Endothelial cell of umbilical vein (primary cell): ENCODE measurements at regions of chr12 and their contacts with region 1.

Region 1: GRCh38 chr12:95633049-95633545 is 81.8 kb upstream of the USP44 start:
- DNase-seq: peak; percentile 90
- H3K4me3 ChIP-seq: no peak overlapping the region
- H3K27ac ChIP-seq: peak overlapping the region; percentile 99
- H3K4me1 ChIP-seq: peaks cover 54% of the 10 kb centered on the region
- H3K27me3 ChIP-seq: no peaks in the 10 kb centered on the region
- CTCF ChIP-seq: no peak
- POLR2A ChIP-seq: no peak

Region 2: GRCh38 chr12:95608252-95609033 is 24.7 kb before region 1 on chr12:
- CTCF ChIA-PET with region 1: interaction called, 5 read pairs
- POLR2A ChIA-PET with region 1: interaction called, 4 read pairs
- dilution Hi-C with region 1: no loop called
- intact Hi-C with region 1: loop called (anchors 1 kb)
- DNase-seq: peak; percentile 91
- H3K4me3 ChIP-seq: no peak overlapping the region
- H3K27ac ChIP-seq: peak overlapping the region; percentile 91
- H3K4me1 ChIP-seq: peaks cover 74% of the 10 kb centered on the region
- H3K27me3 ChIP-seq: no peaks in the 10 kb centered on the region
- CTCF ChIP-seq: no peak
- POLR2A ChIP-seq: no peak

Region 3: GRCh38 chr12:95663525-95663924 is 30.4 kb after region 1 on chr12:
- CTCF ChIA-PET with region 1: interaction called, 3 read pairs
- POLR2A ChIA-PET with region 1: no interaction called
- dilution Hi-C with region 1: no loop called
- intact Hi-C with region 1: loop called (anchors 1 kb)
- DNase-seq: peak; percentile 97
- H3K4me3 ChIP-seq: peak overlapping the region in 2 of 3 experiments; percentile 56 to 67
- H3K27ac ChIP-seq: peak overlapping the region; percentile 93
- H3K4me1 ChIP-seq: peaks cover 26% of the 10 kb centered on the region
- H3K27me3 ChIP-seq: no peaks in the 10 kb centered on the region
- CTCF ChIP-seq: no peak
- POLR2A ChIP-seq: peak; percentile 41

Region 4: DNA sequence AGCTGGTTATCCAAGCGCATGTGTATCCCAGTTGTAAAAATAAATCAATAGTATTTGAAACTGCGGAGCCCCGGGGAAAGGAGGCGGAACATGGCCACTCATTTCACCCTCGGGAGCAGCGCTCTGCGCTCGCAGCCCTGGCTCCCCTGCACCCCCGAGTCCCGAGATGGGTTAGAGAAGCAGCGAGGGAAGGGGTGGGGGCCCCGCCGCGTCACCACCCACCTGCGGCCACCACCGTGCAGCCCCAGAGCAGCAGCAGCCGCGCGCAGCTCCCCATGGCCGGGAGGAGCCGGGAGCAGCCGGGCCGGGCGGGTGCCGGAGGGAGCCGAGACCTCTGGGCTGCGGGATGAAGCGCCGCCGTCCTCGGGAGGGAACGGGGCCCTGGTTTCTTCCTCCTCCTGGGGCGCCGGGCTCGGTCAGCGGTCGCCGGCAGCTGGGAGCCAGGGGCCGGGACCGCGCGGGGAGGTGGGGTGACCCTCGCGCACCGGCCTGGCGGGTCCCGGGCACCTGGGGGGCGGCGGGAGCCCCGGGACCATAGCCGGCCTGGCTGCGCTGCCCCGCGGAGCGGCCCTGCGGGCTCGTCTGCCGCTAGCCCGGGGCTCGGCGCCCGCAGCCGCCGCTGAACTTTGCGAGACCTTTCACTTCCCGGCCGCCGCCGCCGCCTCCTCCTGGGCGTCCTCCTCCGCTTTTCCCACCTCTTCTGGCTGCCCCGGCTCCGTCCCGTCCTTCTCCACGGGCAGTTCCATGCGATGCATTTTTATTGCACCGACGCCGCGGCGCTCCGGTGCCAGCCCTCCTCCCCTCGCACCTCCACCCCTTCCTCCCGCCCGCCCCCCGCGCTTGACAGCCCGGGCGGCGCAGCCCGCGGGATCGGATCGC is 157.2 kb after region 1 on chr12 and contains the start of gene NTN4:
- CTCF ChIA-PET with region 1: no interaction called
- POLR2A ChIA-PET with region 1: no interaction called
- dilution Hi-C with region 1: no loop called
- intact Hi-C with region 1: loop called (anchors 1 kb)
- DNase-seq: peak; percentile 67
- H3K4me3 ChIP-seq: peak within 1 kb of the TSS; percentile 79 to 93 (median 89)
- H3K27ac ChIP-seq: peak within 1 kb of the TSS; percentile 83
- H3K4me1 ChIP-seq: peaks cover 38% of the 10 kb centered on the region
- H3K27me3 ChIP-seq: no peaks in the 10 kb centered on the region
- CTCF ChIP-seq: no peak
- POLR2A ChIP-seq: peak; percentile 66
- total RNA-seq, gene NTN4: 105 and 120 TPM in 2 replicates

Region 5: DNA sequence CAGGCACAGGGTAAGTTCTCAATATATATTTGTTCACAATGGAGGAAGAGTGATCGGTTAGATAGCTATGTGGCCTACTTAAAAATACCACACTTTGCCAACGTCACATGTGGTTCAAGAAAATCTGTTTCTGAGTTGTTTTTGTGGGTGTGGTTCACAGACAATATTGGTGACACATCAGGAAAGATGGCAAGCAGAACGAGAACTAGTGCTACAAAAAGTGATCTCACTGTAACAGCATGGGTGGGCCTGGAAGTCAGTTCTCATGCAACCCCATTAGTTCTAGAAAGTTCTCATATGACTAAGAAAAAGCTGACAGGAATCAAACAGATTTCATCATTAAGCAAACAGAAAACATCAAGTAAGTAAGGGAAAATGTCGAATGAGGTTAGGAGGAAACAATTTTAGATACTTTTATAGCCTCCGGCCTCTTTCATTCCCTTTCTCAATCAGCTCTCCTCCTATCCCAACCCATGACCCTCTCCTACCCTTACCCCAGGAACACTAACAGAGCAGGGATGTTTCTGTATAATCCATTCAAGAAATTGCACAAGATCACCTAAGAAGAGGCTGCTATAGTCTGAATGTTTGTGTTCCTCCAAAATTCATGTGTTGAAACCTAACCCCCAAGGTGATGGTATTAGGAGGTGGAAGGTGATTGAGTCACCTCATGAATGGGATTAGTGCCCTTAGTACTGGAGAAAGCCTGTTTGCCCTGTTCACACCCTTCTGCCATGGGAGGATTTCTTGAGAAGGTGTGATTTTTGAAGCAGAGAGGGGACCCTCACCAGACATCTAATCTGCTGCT is 173.0 kb after region 1 on chr12:
- CTCF ChIA-PET with region 1: interaction called, 4 read pairs
- POLR2A ChIA-PET with region 1: no interaction called
- dilution Hi-C with region 1: no loop called
- intact Hi-C with region 1: loop called (anchors 1 kb)
- DNase-seq: peak; percentile 85
- H3K4me3 ChIP-seq: no peak overlapping the region
- H3K27ac ChIP-seq: peak overlapping the region; percentile 74
- H3K4me1 ChIP-seq: peaks cover 40% of the 10 kb centered on the region
- H3K27me3 ChIP-seq: no peaks in the 10 kb centered on the region
- CTCF ChIP-seq: no peak
- POLR2A ChIP-seq: no peak

Region 6: DNA sequence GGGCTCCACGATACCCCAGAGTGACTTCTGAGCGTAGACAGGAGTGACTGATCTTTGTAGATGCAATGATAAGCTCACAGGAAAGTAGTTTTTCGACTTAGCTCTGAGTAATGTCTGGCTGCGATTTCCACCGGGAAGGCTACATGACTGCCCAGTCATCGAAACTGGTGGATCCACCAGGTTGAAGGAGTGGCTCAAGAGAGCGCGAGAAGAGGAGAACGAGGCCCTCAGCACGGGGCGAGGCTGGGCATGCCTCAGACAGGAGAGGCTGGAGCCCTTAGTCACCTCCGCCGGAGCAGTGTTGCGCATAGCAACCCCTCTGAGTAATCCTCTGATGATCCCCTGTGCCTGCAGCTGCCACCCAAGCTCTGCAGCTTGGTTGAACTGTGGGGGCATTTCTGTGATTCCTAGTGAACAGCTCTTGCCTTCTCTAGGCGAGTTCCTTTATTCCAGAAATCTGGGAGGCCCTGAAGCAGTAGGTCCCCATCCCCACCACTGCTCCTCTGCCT is 586.7 kb after region 1 on chr12:
- CTCF ChIA-PET with region 1: no interaction called
- POLR2A ChIA-PET with region 1: no interaction called
- dilution Hi-C with region 1: no loop called
- intact Hi-C with region 1: loop called (anchors 10 kb)
- DNase-seq: peak; percentile 96
- H3K4me3 ChIP-seq: no peak overlapping the region
- H3K27ac ChIP-seq: peak overlapping the region; percentile 90
- H3K4me1 ChIP-seq: peaks cover 93% of the 10 kb centered on the region
- H3K27me3 ChIP-seq: no peaks in the 10 kb centered on the region
- CTCF ChIP-seq: no peak
- POLR2A ChIP-seq: peak; percentile 63